ENCODE measurements at regions of chr3 and their contacts with region 1.

Region 1: DNA sequence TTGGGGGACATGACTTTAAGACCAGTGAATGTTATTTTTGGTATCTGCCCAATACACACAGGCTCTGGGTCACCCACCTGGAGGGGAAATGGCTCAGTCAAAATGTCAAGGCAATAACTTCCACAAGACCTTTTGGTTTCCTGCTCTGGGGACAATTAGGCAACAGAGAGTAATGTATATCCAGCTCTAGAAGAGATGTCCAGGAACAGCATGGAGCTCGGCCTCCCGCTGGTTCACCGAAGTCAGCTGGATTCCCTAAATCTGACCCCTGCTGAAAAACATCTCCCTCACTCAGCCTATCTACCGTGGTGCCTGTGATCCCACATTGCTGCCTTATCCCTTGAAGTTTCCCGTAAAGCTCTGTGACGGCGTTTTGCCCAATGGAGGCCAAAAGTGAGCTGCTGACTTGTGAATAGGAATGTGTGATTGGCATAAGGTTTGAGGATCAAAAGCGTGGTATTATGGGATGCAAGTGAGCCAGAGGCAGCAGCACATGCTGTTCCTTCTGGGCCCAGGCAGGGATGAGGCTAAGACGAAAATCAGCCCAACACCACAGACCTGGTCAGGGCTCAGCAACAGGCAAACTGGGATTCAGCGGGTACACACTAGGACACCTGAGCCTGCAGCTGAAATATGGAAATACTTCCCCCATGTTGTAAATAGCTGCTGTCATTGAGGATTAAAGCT is 47.2 kb upstream of the SLC6A11 start:
- DNase-seq: no peak
- H3K4me3 ChIP-seq: no peak overlapping the region
- H3K27ac ChIP-seq: no peak overlapping the region
- H3K27me3 ChIP-seq: no peaks in the 10 kb centered on the region
- CTCF ChIP-seq: no peak

Region 2: DNA sequence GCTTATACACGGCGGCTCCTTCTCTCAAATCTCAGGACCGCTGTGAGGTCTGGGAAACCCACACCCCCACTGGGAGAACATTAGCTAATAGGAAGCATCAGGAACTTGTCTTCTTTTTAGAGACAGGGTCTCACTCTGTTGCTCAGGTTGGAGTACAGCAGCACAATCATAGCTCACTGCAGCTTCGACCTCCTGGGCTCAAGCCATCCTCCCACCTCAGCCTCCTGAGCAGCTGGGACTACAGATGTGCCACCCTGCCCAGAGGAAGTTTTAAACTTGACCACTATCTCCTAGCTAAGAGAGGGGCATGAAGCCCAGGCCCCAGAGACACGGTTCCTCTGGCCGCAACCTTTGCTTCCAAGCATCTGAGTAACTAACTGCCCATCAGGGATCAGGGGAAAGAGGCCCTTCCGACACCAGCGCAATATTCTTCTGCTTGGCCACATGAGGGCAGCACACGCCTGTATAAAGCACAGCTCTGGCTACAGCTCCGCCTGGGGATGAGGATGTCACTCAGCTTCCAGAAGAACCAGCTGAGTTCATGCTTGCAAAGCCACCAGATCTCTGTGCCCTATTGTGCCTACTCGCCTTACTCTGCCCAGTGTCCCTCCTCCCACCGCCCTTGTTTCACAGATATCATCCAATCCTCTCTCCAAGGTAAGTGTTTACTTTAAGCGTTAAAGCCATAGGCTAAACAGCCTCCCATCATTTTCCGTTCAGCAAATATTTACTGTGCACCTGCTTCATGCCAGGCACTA is 10.4 kb before region 1 on chr3:
- CTCF ChIA-PET with region 1: interaction called, 14 read pairs
- POLR2A ChIA-PET with region 1: no interaction called
- DNase-seq: peak; percentile 36
- H3K4me3 ChIP-seq: no peak overlapping the region
- H3K27ac ChIP-seq: no peak overlapping the region
- H3K27me3 ChIP-seq: no peaks in the 10 kb centered on the region
- CTCF ChIP-seq: peak; percentile 68